MCF 10A (cell line): ENCODE measurements at regions of chr7 and their contacts with region 1.

Region 1: GRCh38 chr7:44606450-44607254 is at the start of gene OGDH:
- DNase-seq: peak; percentile 98
- H3K4me3 Mint-ChIP-seq: peak within 1 kb of the TSS; percentile 97
- H3K27ac Mint-ChIP-seq: peak within 1 kb of the TSS; percentile 99
- H3K4me1 Mint-ChIP-seq: peaks cover 9% of the 10 kb centered on the region
- H3K27me3 Mint-ChIP-seq: no peaks in the 10 kb centered on the region
- CTCF ChIP-seq: no peak
- total RNA-seq, gene OGDH: 75.1 and 91.1 TPM in 2 replicates

Region 2: DNA sequence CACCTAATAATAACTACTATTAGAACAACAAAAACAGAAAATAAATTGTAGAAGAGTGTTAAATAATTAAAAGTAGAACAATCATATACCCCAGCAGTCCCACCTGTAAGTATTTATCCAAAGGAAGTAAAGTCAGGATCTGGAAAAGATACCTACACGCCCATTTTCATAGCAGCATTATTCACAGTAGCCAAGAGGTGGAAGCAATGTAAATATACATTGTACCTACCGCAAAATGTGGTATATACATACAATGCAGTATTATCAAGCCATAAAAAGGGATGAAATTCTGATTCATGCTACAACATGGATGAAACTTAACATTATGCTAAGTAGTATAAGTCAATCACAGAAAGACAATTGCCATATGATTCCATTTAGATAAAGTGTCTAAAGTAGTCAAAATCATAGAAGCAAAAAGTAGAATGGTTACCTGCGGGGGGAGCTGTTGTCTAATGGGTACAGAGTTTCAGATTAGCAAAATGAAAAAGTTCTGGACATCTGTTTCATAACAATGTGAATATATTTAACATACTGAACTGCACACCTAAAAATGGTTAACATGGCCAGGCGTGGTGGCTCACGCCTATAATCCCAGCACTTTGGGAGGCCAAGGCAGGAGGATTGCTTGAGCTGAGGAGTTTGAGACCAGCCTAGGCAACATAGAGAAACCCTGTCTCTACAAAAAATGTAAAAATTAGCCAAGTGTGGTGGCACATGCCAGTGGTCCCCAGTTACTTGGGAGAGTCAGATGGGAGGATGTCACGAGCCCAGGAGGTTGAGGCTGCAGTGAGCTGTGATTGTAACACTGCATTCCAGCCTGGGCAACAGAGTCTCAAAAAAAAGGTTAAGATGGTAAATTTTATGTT is 18.6 kb before region 1 on chr7:
- CTCF ChIA-PET with region 1: interaction called, 3 read pairs
- POLR2A ChIA-PET with region 1: interaction called, 46 read pairs
- intact Hi-C with region 1: no loop called
- DNase-seq: peak; percentile 76
- H3K4me3 Mint-ChIP-seq: no peak overlapping the region
- H3K27ac Mint-ChIP-seq: no peak overlapping the region
- H3K4me1 Mint-ChIP-seq: peaks cover 7% of the 10 kb centered on the region
- H3K27me3 Mint-ChIP-seq: peaks cover 6% of the 10 kb centered on the region
- CTCF ChIP-seq: peak; percentile 72

Region 3: GRCh38 chr7:44633254-44634186 is 26.9 kb after region 1 on chr7:
- CTCF ChIA-PET with region 1: interaction called, 4 read pairs
- POLR2A ChIA-PET with region 1: interaction called, 92 read pairs
- intact Hi-C with region 1: loop called (anchors 1 kb)
- DNase-seq: peak; percentile 92
- H3K4me3 Mint-ChIP-seq: no peak overlapping the region
- H3K27ac Mint-ChIP-seq: peak overlapping the region; percentile 84
- H3K4me1 Mint-ChIP-seq: peaks cover 40% of the 10 kb centered on the region
- H3K27me3 Mint-ChIP-seq: no peaks in the 10 kb centered on the region
- CTCF ChIP-seq: no peak

Region 4: GRCh38 chr7:44678471-44679179 is 72.0 kb after region 1 on chr7:
- CTCF ChIA-PET with region 1: no interaction called
- POLR2A ChIA-PET with region 1: interaction called, 11 read pairs
- intact Hi-C with region 1: loop called (anchors 2 kb)
- DNase-seq: peak; percentile 93
- H3K4me3 Mint-ChIP-seq: peak overlapping the region; percentile 21
- H3K27ac Mint-ChIP-seq: no peak overlapping the region
- H3K4me1 Mint-ChIP-seq: peaks cover 40% of the 10 kb centered on the region
- H3K27me3 Mint-ChIP-seq: no peaks in the 10 kb centered on the region
- CTCF ChIP-seq: no peak

Region 5: DNA sequence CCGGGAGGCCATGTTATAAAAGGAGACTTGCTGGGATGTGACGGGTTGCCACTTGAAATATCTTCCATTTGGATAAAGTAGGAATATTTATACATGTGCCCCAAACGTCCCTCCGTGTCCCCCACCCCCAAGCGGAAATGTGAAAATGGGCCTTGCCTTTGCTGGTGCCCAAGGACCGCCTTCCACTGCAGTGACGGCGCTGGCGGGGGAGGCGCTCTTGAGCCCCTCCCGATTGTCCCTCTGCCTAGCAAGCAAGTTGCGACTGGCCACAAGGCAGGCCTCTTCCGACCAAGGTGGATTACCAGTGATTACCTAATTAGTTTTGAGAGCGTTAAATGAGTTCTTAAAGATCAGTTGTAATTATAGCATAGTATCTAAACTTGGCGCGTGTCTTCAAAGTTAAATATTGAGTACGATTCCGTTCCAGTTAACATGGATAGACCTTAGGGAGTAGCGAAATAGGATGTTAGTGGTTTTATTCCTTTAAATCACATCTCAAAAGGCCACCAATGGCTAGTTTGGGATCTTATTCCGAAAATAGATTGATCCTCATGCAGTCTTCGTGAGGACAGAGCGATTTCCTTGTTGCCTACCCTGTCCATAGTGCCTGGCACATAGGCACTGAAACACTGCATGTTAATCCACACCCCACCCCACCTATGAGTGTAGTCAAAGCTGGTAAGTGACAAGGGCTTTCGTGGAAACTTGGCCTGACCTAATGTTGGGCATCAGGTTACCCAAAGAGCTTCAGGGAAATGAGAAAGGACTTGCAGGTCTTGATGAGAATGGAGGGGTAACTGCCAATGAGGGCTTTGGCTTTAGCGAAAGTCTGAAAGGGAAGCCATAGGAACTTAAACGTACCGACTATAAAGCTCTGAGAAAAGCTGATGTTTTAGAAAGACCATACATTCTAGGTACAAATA is 190.9 kb after region 1 on chr7:
- CTCF ChIA-PET with region 1: interaction called, 3 read pairs
- POLR2A ChIA-PET with region 1: interaction called, 24 read pairs
- intact Hi-C with region 1: loop called (anchors 1 kb)
- DNase-seq: peak; percentile 90
- H3K4me3 Mint-ChIP-seq: peak overlapping the region; percentile 87
- H3K27ac Mint-ChIP-seq: peak overlapping the region; percentile 98
- H3K4me1 Mint-ChIP-seq: peaks cover 6% of the 10 kb centered on the region
- H3K27me3 Mint-ChIP-seq: no peaks in the 10 kb centered on the region
- CTCF ChIP-seq: peak; percentile 42